Activated B cell treated with CpG ODN at 0.5 μM for 24 hours (primary cell): ENCODE measurements at regions of chr17 and their contacts with region 1.

Region 1: DNA sequence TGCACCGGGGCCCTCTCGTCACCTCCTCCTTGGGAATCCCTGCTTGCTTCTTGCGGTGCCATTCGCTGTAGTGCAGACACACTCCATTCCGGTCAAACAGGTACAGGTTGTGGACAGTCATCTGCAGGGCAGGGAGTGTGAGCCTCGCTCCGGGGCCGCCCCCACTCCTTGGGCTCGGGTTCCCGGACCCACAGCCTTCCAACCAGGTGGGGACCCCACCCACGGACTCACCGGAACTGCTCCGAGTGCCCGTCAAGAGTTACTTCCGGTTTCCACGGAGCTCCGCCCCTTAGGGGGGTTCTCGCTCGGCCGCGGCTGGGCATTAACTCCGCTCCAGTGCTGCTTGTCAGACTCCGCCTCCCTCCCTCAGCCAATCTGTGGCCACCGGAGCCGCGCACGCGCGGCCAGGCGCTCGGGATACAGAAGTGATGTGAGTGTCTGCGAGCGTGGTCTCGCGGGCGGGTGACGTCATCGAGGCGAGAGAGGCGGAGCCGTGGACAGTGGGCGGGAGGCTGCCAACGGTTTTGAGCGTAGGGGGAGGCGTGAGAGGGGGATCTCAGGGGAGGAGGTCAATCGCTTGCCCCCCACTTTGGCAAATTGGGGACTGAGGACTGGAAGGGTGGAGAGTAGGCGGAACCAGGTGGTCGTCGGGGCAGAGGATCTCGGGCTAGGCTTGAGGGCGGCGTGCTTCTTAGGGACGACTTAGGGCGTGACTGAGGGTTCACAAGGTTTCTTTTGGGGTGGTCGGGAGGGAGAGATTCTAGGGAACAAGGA is at the starts of genes CNTROB and TRAPPC1:
- DNase-seq: peak; percentile 99
- ATAC-seq: peak; percentile 96
- H3K4me3 Mint-ChIP-seq: peak within 1 kb of the TSS; percentile 97
- H3K27ac Mint-ChIP-seq: peak within 1 kb of the TSS; percentile 92
- H3K4me1 Mint-ChIP-seq: peaks cover 48% of the 10 kb centered on the region
- H3K27me3 Mint-ChIP-seq: no peaks in the 10 kb centered on the region
- CTCF ChIP-seq: no peak
- total RNA-seq, gene CNTROB: 23.0 and 24.6 TPM in 2 replicates
- total RNA-seq, gene TRAPPC1: 129 and 167 TPM in 2 replicates

Region 2: GRCh38 chr17:7627250-7628121 is 304.4 kb before region 1 on chr17 and contains the start of gene SAT2:
- CTCF ChIA-PET with region 1: no interaction called
- POLR2A ChIA-PET with region 1: no interaction called
- intact Hi-C with region 1: loop called (anchors 2 kb)
- DNase-seq: peak; percentile 68
- ATAC-seq: peak; percentile 99
- H3K4me3 Mint-ChIP-seq: peak within 1 kb of the TSS; percentile 93
- H3K27ac Mint-ChIP-seq: peak within 1 kb of the TSS; percentile 80
- H3K4me1 Mint-ChIP-seq: peaks cover 11% of the 10 kb centered on the region
- H3K27me3 Mint-ChIP-seq: no peaks in the 10 kb centered on the region
- CTCF ChIP-seq: no peak
- total RNA-seq, gene SAT2: 44.5 and 45.0 TPM in 2 replicates

Region 3: DNA sequence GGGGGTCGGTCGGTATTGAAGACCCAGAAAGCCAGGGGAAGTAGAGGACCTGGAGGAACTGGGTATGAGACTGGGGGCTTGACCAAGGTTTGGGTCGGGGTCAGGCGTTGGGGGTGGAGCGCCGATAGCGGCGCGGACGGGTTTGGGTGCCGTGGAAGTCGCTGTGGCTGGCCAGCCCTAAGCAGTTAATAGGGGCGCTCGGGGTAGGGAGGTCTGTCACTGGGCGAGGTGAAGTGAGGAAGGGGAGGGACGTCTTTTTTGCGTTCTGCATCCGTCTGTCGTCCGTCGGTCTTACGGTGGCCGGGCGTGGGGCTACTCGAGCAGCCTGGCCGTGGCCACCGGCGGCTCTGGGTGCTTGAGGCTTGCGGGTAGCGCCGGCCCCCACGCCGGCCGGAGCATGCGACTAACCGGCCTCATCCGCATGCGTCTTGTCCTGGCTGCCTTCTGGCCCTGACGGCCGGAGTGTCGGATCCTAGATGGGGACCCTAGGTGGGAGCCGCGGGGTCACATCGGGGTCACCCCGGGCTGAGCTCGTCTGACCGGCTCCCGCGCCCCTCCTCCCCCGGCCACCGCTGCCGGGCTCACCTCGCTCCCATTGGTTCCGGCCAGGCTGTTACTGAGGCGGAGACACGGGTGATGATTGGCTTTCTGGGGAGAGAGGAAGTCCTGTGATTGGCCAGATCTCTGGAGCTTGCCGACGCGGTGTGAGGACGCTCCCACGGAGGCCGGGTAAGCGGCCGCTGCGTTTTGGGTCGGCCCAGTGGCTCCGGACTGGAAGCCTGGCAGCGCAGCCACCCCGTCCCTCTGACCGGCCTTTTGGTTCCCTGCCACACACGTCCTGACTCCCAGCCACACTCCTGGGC is 87.4 kb before region 1 on chr17:
- CTCF ChIA-PET with region 1: no interaction called
- POLR2A ChIA-PET with region 1: interaction called, 15 read pairs
- intact Hi-C with region 1: no loop called
- DNase-seq: peak; percentile 83
- ATAC-seq: peak; percentile 46
- H3K4me3 Mint-ChIP-seq: peak overlapping the region; percentile 98
- H3K27ac Mint-ChIP-seq: peak overlapping the region; percentile 100
- H3K4me1 Mint-ChIP-seq: peaks cover 50% of the 10 kb centered on the region
- H3K27me3 Mint-ChIP-seq: no peaks in the 10 kb centered on the region
- CTCF ChIP-seq: no peak

Region 4: DNA sequence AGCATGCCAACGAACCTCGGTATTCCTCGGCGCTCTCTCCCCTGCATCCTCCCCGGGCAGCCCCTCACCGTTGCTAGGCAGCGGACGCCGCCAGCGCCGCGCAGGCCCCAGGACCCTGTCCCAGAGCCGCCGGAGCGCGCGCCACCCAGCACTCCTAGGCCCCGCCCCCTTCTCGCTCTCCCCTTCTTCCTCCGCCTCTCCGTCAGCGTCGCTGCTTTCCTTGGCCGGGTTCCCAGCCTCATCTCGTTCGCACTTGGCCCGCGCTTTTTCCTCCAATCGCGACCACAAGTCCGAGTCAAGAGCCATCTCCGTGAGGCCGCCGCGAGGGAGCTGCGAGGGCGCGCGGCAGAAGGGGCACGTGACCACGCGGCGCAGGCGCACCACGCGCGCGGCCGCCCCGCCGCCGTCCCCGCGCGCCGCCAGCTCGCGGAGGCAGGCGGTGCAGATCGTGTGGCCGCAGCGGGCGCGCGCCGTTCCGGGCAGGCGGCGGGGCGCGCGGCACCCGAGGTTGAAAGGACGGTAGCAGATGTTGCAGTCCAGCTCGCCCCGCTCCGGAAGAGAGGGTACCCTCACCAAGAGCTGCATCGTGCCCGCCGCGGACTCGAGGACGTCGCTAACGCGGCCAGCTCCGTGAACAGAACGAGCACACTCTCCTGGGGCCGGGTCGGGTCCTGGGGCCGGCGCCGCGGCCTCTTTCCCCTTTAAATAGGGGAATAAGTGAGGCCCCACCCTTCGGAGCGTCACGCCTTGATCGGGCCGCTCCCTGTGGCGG is 16.1 kb before region 1 on chr17 and contains the start of gene RNF227:
- CTCF ChIA-PET with region 1: interaction called, 6 read pairs
- POLR2A ChIA-PET with region 1: interaction called, 58 read pairs
- intact Hi-C with region 1: loop called (anchors 1 kb)
- DNase-seq: peak; percentile 81
- ATAC-seq: peak; percentile 83
- H3K4me3 Mint-ChIP-seq: peak within 1 kb of the TSS; percentile 91
- H3K27ac Mint-ChIP-seq: peak within 1 kb of the TSS; percentile 87
- H3K4me1 Mint-ChIP-seq: peaks cover 23% of the 10 kb centered on the region
- H3K27me3 Mint-ChIP-seq: no peaks in the 10 kb centered on the region
- CTCF ChIP-seq: no peak
- total RNA-seq, gene RNF227: 2.5 and 2.8 TPM in 2 replicates

Region 5: DNA sequence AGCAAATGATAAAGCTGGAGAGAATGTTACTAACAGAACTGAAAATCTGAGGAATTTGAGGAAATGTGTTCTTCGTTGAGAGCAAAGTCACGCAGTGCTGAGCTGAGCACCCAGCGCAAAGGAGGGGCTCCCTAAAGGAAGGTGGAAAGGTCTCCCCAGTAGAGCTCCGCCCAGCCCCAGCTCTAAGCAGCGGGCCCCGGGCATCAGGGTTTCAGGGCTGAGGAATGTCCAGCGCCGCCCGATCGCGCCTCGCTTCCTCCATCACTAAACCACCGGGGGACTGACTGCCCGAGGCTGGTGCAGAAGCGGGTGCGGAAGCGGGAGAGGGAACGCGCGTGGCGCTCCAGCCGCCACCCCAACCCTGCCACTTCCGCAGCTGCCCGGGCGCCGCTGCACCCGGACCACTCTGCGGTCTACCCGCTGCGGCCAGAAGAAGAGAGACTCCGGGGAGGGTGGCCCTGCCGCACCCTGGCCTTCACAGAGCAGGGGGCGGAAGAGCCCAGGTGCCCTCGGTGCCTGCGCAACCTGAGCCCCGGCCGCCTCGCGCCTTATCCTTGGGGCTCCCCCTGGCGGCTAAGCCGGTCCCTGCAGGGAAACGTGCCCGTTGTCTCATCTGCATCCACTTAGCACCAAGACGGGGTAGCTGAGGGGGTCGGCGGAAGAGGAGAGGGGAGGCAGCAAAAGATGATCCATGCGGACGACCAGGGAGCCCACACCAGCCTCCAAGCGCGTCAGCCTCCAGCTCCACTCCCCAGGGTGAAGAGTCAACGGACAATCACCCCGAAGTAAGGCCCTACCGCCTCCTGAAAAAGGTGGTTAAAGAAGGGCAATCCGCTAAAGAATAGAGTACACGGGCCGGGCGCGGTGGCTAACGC is 58.1 kb after region 1 on chr17:
- CTCF ChIA-PET with region 1: interaction called, 29 read pairs
- POLR2A ChIA-PET with region 1: interaction called, 6 read pairs
- intact Hi-C with region 1: loop called (anchors 1 kb)
- DNase-seq: peak; percentile 96
- ATAC-seq: peak; percentile 94
- H3K4me3 Mint-ChIP-seq: peak overlapping the region; percentile 77
- H3K27ac Mint-ChIP-seq: peak overlapping the region; percentile 75
- H3K4me1 Mint-ChIP-seq: peaks cover 17% of the 10 kb centered on the region
- H3K27me3 Mint-ChIP-seq: peaks cover 9% of the 10 kb centered on the region
- CTCF ChIP-seq: no peak

Region 6: DNA sequence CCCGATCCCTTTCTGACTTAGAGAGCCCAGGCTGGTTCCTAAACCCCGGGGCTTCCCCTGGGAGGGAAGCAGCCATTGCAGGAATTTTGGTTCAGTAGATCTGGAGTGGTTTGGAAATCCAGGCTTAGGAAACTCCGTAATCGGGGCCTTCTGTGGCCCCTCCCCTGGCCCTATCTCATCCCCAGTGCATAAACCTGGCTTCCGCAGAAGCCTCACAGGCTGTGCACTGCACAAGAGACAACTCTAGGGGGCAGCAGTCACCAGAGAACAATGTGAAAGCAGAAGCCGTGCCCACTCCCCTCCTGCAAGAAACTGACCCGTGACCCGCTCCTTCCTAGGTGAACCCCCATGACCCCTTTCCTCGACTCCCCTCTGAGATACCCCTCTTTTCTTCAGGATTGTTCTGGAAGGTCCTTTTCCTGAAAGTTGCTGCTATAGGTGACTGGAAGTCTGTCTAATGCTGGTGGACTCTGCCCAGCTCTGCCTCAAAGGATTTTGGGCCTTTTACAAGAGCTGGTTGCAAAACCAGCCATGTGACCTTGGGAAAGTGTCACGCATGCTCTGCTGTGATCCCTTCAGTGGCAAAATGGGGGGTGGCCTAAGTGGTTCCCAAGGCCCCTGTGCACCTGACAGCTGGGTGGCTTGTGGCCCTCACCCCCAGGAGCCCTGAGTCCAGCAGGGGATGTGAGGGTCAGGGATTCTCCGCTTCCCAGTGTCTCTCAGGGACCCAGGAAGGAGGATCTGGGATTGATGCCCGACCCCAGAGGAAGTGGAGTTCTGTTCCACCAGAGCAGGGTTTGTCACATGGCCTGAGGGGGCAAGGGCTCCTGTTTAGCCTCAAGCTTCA is 85.0 kb after region 1 on chr17:
- CTCF ChIA-PET with region 1: no interaction called
- POLR2A ChIA-PET with region 1: no interaction called
- intact Hi-C with region 1: no loop called
- DNase-seq: no peak
- ATAC-seq: peak; percentile 69
- H3K4me3 Mint-ChIP-seq: peak overlapping the region; percentile 66
- H3K27ac Mint-ChIP-seq: no peak overlapping the region
- H3K4me1 Mint-ChIP-seq: peaks cover 20% of the 10 kb centered on the region
- H3K27me3 Mint-ChIP-seq: peaks cover 52% of the 10 kb centered on the region
- CTCF ChIP-seq: no peak